Left lung (tissue), 14 donors: ENCODE measurements at regions of chr12 and their contacts with region 1.

Region 1: GRCh38 chr12:54368709-54369583 is 4.7 kb upstream of the GPR84 start:
- DNase-seq: peak; percentile 88 to 96 (median 94)
- ATAC-seq: peak; percentile 80
- H3K4me3 ChIP-seq: no peak overlapping the region
- H3K27ac ChIP-seq: peak overlapping the region; percentile 53 to 71
- H3K4me1 ChIP-seq: peaks cover 20 to 82% of the 10 kb centered on the region in 2 donors
- H3K27me3 ChIP-seq: no peaks in the 10 kb centered on the region
- CTCF ChIP-seq: peak; percentile 73 to 78

Region 2: DNA sequence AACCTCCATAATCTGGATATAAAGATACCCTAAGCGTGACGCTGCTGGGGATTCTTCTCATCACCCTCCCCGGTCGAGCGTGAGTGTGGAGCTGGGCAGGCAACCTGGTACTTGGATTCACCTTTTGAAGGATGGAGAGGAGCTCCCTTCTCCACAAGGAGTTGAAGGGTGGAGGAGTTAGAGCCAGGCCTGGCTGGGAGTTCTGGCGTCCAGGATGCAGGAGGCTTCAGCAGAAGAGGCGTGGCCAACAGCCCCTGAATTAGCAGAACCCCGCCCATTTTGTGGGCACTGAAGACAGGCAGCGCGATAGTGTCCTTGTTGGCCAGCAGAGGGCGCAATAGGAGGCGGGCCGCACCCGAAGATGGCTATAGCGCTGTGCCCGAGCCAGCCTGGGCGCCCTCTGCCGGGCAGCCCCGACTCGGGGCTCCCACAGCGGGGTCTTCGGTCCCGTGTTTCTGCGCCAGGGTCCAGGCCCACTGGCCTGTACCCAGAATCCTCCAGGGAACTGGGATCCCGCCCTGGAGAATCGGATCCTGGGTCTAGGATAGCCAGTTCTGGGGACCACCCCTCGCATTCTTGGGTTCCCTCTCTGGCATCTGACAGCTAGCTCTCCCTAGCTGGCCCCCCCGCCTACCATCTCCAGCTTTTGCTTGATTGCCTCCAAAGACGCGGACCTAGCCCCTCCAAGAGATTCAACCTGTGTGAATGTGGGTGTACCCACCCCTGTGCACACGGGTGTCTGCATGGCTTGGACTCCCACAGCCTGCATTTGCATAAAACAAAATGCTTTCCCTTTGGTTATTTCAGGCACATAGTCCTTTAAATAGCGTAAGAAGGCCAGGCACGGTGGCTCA is 154.2 kb before region 1 on chr12:
- intact Hi-C with region 1: loop called in 1 of 2 experiments (anchors 10 kb)
- DNase-seq: peak in 3 of 4 donors; percentile 87 to 96 (median 88)
- ATAC-seq: peak; percentile 93
- H3K4me3 ChIP-seq: no peak overlapping the region
- H3K27ac ChIP-seq: no peak overlapping the region
- H3K4me1 ChIP-seq: peaks cover 10 to 33% of the 10 kb centered on the region in 2 donors
- H3K27me3 ChIP-seq: peaks cover 6 to 93% of the 10 kb centered on the region in 2 donors
- CTCF ChIP-seq: peak; percentile 95 to 99

Region 3: GRCh38 chr12:54294152-54294952 is 74.6 kb before region 1 on chr12:
- intact Hi-C with region 1: loop called in 1 of 2 experiments (anchors 10 kb)
- DNase-seq: peak in 2 of 4 donors; percentile 60 to 89
- ATAC-seq: peak; percentile 90
- H3K4me3 ChIP-seq: peak overlapping the region in 1 of 2 donors; percentile 21
- H3K27ac ChIP-seq: peak overlapping the region in 1 of 2 donors; percentile 86
- H3K4me1 ChIP-seq: peaks cover 0 to 83% of the 10 kb centered on the region in 2 donors
- H3K27me3 ChIP-seq: peaks cover 0 to 9% of the 10 kb centered on the region in 2 donors
- CTCF ChIP-seq: peak; percentile 61 to 84